CD4-positive, alpha-beta T cell (primary cell): ENCODE measurements at regions of chr2 and their contacts with region 1.

Region 1: GRCh38 chr2:197931661-197932312 is 127.4 kb downstream of the PLCL1 start:
- DNase-seq: no peak
- ATAC-seq: no peak
- H3K4me3 ChIP-seq: no peak overlapping the region
- H3K4me3 Mint-ChIP-seq: no peak overlapping the region
- H3K27ac ChIP-seq: no peak overlapping the region
- H3K27ac Mint-ChIP-seq: no peak overlapping the region
- H3K4me1 ChIP-seq: no peaks in the 10 kb centered on the region
- H3K4me1 Mint-ChIP-seq: peaks cover 71% of the 10 kb centered on the region
- H3K27me3 ChIP-seq: no peaks in the 10 kb centered on the region
- H3K27me3 Mint-ChIP-seq: no peaks in the 10 kb centered on the region
- CTCF ChIP-seq: no peak

Region 2: GRCh38 chr2:197889041-197889440 is 42.7 kb before region 1 on chr2:
- CTCF ChIA-PET with region 1: no interaction called
- POLR2A ChIA-PET with region 1: interaction called, 4 read pairs
- intact Hi-C with region 1: loop called in 1 of 2 experiments (anchors 2 kb)
- DNase-seq: peak in 7 of 14 experiments; percentile 21 to 78 (median 44)
- ATAC-seq: peak; percentile 85
- H3K4me3 ChIP-seq: no peak overlapping the region
- H3K4me3 Mint-ChIP-seq: peak overlapping the region; percentile 64
- H3K27ac ChIP-seq: peak overlapping the region in 1 of 2 donors; percentile 6
- H3K27ac Mint-ChIP-seq: peak overlapping the region; percentile 90
- H3K4me1 ChIP-seq: peaks cover 28% of the 10 kb centered on the region
- H3K4me1 Mint-ChIP-seq: peaks cover 79% of the 10 kb centered on the region
- H3K27me3 ChIP-seq: no peaks in the 10 kb centered on the region
- H3K27me3 Mint-ChIP-seq: no peaks in the 10 kb centered on the region
- CTCF ChIP-seq: no peak

Region 3: DNA sequence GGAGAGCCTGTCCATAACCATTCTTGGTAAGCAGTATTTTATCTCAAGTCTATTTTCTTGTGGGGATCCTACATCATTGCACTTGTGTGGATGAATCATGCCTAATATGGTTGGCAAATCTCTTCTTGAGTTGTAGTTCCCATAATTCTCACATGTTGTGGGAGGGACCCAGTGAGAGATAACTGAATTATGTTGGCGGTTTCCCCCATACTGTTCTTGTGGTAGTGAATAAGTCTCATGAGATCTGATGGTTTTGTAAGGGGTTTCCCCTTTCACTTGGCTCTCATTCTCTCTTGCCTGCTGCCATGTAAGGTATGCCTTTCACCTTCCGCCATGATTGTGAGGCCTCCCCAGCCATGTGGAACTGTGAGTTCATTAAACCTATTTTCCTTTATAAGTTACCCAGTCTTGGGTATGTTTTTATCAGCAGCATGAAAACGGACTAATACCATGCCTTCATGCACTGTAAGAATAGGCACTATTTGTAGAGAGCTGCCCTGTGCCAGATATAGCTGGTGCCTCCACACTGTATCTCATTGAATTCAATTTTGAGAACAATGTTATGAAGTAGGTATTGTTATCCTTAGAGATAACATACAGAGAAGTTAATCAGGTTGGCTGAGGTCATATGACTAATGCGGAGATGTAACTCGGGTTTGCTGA is 20.9 kb after region 1 on chr2:
- CTCF ChIA-PET with region 1: no interaction called
- POLR2A ChIA-PET with region 1: interaction called, 4 read pairs
- intact Hi-C with region 1: loop called in 1 of 2 experiments (anchors 1 kb)
- DNase-seq: peak in 1 of 14 experiments; percentile 16
- ATAC-seq: no peak
- H3K4me3 ChIP-seq: no peak overlapping the region
- H3K4me3 Mint-ChIP-seq: peak overlapping the region; percentile 7
- H3K27ac ChIP-seq: no peak overlapping the region
- H3K27ac Mint-ChIP-seq: peak overlapping the region; percentile 80
- H3K4me1 ChIP-seq: no peaks in the 10 kb centered on the region
- H3K4me1 Mint-ChIP-seq: peaks cover 94% of the 10 kb centered on the region
- H3K27me3 ChIP-seq: no peaks in the 10 kb centered on the region
- H3K27me3 Mint-ChIP-seq: no peaks in the 10 kb centered on the region
- CTCF ChIP-seq: no peak

Region 4: DNA sequence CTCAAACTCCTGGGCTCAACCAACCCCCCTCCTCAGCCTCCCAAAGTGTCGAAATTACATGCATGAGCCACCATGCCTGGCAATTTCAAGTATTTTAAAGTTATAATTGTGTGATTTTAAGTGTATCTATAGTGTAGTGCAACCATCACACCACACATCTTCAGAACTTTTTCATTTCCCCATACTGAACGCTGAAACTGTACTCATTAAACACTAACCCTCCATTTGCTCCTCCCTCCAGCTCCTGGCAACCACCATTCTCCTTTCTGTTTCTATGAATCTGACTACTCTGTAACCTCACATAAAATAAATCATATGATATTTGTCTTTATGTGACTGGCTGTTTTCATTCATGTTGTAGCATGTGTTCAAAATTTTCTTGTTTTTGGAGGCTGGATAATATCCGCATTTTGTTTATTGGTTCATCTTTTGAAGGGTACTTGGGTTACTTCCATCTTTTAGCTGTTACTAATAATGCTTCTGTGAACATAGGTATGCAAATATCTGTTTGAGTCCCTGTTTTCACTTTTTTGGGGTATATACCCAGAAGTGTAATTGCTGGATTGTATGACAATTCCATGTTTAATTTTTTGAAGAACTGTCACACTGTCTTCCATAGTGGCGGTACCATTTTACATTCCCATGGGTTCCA is 60.8 kb after region 1 on chr2:
- CTCF ChIA-PET with region 1: no interaction called
- POLR2A ChIA-PET with region 1: no interaction called
- intact Hi-C with region 1: no loop called
- DNase-seq: no peak
- ATAC-seq: no peak
- H3K4me3 ChIP-seq: no peak overlapping the region
- H3K4me3 Mint-ChIP-seq: no peak overlapping the region
- H3K27ac ChIP-seq: no peak overlapping the region
- H3K27ac Mint-ChIP-seq: no peak overlapping the region
- H3K4me1 ChIP-seq: peaks cover 28% of the 10 kb centered on the region
- H3K4me1 Mint-ChIP-seq: peaks cover 63% of the 10 kb centered on the region
- H3K27me3 ChIP-seq: no peaks in the 10 kb centered on the region
- H3K27me3 Mint-ChIP-seq: no peaks in the 10 kb centered on the region
- CTCF ChIP-seq: no peak

Region 5: DNA sequence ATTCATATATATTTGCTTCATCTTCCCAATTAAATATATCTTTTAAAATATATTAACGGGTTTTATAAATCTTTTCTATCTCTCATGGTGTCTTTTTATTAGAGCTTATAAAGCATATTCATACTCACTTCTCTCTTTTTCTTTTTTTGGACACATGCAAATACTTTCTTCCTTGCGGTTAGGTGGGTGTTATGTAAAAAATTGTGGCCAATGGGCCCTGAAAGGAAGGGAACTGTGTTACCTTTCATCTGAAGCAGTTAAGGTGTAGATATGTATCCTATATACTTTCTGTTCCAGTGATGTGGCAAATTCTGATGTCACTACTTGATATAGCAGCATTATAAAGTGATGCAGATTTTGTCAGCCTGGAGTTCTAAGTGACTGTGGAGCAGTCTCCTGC is 587.1 kb after region 1 on chr2:
- CTCF ChIA-PET with region 1: no interaction called
- POLR2A ChIA-PET with region 1: no interaction called
- intact Hi-C with region 1: no loop called
- DNase-seq: no peak
- ATAC-seq: no peak
- H3K4me3 ChIP-seq: no peak overlapping the region
- H3K4me3 Mint-ChIP-seq: no peak overlapping the region
- H3K27ac ChIP-seq: no peak overlapping the region
- H3K27ac Mint-ChIP-seq: no peak overlapping the region
- H3K4me1 ChIP-seq: no peaks in the 10 kb centered on the region
- H3K4me1 Mint-ChIP-seq: no peaks in the 10 kb centered on the region
- H3K27me3 ChIP-seq: no peaks in the 10 kb centered on the region
- H3K27me3 Mint-ChIP-seq: no peaks in the 10 kb centered on the region
- CTCF ChIP-seq: no peak